CD4-positive, alpha-beta memory T cell (primary cell): ENCODE measurements at regions of chr9 and their contacts with region 1.

Region 1: GRCh38 chr9:83636813-83637212 is 13.9 kb downstream of the IDNK start:
- DNase-seq: no peak
- H3K4me3 ChIP-seq: no peak overlapping the region
- H3K4me3 Mint-ChIP-seq: no peak overlapping the region
- H3K27ac ChIP-seq: no peak overlapping the region
- H3K27ac Mint-ChIP-seq: no peak overlapping the region
- H3K4me1 ChIP-seq: no peaks in the 10 kb centered on the region
- H3K4me1 Mint-ChIP-seq: peaks cover 0 to 4% (median 0%) of the 10 kb centered on the region in 4 donors
- H3K27me3 ChIP-seq: no peaks in the 10 kb centered on the region
- H3K27me3 Mint-ChIP-seq: no peaks in the 10 kb centered on the region

Region 2: DNA sequence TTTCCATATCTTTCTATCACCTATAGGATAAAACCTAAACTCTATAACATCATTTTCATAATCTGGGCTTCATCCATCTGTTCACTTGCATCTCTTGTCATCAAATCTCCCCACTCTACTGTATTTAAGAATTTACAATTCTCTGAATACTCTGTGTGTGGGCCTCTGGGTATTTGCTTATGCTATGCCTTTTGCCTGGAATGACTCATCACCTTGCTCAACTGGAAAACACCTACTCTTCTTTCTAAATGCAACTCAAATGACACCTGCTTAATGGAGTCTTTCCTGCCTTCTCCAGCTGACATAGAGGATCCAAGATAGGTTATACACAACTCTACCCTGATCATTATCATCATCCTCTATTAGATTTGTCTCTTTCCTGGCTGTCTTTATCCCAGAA is 1226.5 kb before region 1 on chr9:
- CTCF ChIA-PET with region 1: no interaction called
- POLR2A ChIA-PET with region 1: no interaction called
- intact Hi-C with region 1: no loop called
- DNase-seq: no peak
- H3K4me3 ChIP-seq: no peak overlapping the region
- H3K4me3 Mint-ChIP-seq: no peak overlapping the region
- H3K27ac ChIP-seq: no peak overlapping the region
- H3K27ac Mint-ChIP-seq: no peak overlapping the region
- H3K4me1 ChIP-seq: no peaks in the 10 kb centered on the region
- H3K4me1 Mint-ChIP-seq: no peaks in the 10 kb centered on the region
- H3K27me3 ChIP-seq: no peaks in the 10 kb centered on the region
- H3K27me3 Mint-ChIP-seq: no peaks in the 10 kb centered on the region

Region 3: DNA sequence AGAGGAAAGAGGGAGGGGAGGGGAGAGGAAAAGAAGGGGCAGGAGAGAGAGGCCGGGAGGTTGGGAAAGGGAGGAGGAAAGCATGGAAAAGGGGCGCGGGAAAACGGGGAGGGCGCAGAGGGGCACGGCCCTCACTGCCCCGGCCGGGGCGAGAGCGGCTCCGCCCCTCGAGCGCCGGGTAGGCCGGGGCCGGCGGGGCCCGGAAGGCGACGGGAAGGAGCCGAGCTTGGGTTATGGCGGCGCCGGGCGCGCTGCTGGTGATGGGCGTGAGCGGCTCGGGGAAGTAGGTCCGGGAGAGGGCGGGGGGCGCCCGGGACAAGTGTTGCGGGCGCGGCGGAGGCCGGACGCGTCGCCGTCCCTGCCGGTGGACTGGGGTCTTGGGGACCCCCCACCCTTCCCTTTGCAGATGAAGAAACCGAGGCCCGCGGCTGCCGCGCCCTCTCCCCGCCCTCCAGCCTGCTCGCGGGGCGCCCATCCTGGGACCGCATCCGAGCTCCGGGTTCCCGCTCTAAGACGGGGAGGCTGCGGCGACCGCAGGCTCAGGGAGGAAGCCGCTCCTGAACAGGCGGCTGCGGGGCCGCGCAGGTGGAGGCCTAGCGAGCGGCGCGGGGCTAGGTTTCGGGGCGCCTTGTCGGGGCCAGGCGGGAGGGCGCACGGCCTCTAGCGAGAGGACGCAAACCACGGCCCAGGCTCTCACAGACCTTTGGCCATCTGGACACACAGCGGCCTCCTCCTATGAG is 13.7 kb before region 1 on chr9 and contains the start of gene IDNK:
- CTCF ChIA-PET with region 1: interaction called, 26 read pairs
- POLR2A ChIA-PET with region 1: interaction called, 10 read pairs
- intact Hi-C with region 1: no loop called
- DNase-seq: peak; percentile 66 to 72 (median 69)
- H3K4me3 ChIP-seq: peak within 1 kb of the TSS; percentile 30 to 63
- H3K4me3 Mint-ChIP-seq: peak within 1 kb of the TSS; percentile 92 to 99 (median 95)
- H3K27ac ChIP-seq: peak within 1 kb of the TSS; percentile 82
- H3K27ac Mint-ChIP-seq: peak within 1 kb of the TSS; percentile 85 to 97 (median 94)
- H3K4me1 ChIP-seq: peaks cover 24% of the 10 kb centered on the region
- H3K4me1 Mint-ChIP-seq: peaks cover 21 to 41% (median 33%) of the 10 kb centered on the region in 4 donors
- H3K27me3 ChIP-seq: no peaks in the 10 kb centered on the region
- H3K27me3 Mint-ChIP-seq: no peaks in the 10 kb centered on the region
- total RNA-seq, gene IDNK: 10.1 to 10.2 TPM